ENCODE measurements at regions of chr11 and their contacts with region 1.

Region 1: DNA sequence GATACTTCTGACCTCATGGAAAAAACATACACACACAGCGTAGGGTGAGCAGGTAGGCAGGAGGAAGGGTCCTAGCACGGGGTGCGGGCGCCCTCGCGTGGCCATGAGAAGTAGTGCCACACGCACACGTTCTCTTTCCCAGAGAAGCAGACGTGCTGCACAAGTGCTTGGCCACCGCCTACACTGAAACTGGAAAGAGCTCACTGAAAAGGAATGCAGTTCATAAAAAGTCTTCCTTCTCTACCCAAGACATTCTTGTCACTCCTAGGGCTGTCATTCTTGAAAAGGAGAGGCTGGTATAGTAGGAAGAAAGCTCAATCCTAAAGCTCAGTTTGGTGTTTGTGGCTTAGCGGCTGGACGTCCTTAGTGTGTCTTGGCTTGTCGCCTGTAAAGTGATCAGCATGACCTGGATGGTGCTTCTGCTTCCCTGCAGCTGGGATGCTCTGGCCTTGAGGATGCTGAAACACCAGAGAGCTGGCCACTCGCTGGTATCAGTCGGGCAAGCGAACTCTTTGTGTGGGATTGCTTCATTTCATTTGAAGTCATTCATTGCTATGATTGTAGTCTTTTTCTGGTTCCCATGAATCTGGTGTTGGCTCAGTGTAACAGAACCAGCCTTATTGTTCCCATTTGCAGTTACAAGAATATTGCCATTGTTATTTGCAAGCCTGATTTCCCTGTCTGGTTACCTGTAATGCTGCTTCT is 303.8 kb downstream of the NTM start:
- DNase-seq: peak; percentile 50 to 96
- H3K4me3 ChIP-seq: no peak overlapping the region
- H3K27ac ChIP-seq: no peak overlapping the region
- H3K4me1 ChIP-seq: peaks cover 3 to 9% (median 5%) of the 10 kb centered on the region in 4 experiments; a peak in 5 of 7 replicates
- H3K27me3 ChIP-seq: no peaks in the 10 kb centered on the region; a peak in 1 of 7 replicates
- CTCF ChIP-seq: peak; percentile 95 to 97 (median 97)
- EP300 ChIP-seq: no peak
- POLR2A ChIP-seq: no peak
- RAD21 ChIP-seq: peak; percentile 99

Region 2: GRCh38 chr11:131025020-131025419 is 649.2 kb before region 1 on chr11:
- CTCF ChIA-PET with region 1: interaction called, 24 read pairs
- POLR2A ChIA-PET with region 1: no interaction called
- DNase-seq: no peak
- H3K4me3 ChIP-seq: no peak overlapping the region
- H3K27ac ChIP-seq: no peak overlapping the region
- H3K4me1 ChIP-seq: no peaks in the 10 kb centered on the region
- H3K27me3 ChIP-seq: no peaks in the 10 kb centered on the region
- CTCF ChIP-seq: peak; percentile 72 to 93 (median 82)
- EP300 ChIP-seq: no peak
- POLR2A ChIP-seq: no peak
- RAD21 ChIP-seq: peak; percentile 93 to 94

Region 3: DNA sequence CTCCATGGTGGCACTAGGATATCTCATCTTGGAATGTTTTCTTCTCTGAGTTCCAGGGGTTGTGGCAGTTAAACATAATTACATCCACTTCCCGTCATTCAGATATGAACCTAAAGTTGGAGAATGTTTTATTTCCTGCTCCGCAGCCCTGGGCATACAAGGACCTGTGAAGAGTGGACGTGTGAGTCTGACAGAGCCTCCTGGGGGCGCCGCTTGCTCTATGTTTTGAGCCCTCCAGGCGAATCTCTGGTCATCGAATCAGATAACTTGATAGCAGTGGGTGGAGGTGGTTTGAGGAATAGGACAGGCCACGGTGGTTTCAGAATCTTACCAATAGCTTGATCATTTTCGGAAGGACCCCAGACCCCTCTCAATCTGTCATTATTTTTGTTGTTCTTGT is 129.6 kb before region 1 on chr11:
- CTCF ChIA-PET with region 1: interaction called, 20 read pairs
- POLR2A ChIA-PET with region 1: no interaction called
- DNase-seq: peak; percentile 19 to 63
- H3K4me3 ChIP-seq: no peak overlapping the region
- H3K27ac ChIP-seq: no peak overlapping the region
- H3K4me1 ChIP-seq: peaks cover 0 to 4% (median 3%) of the 10 kb centered on the region in 4 experiments; a peak in 6 of 7 replicates
- H3K27me3 ChIP-seq: no peaks in the 10 kb centered on the region
- CTCF ChIP-seq: peak; percentile 51 to 71 (median 63)
- EP300 ChIP-seq: no peak
- POLR2A ChIP-seq: no peak
- RAD21 ChIP-seq: peak; percentile 73 to 83

Region 4: GRCh38 chr11:131579932-131580387 is 94.2 kb before region 1 on chr11:
- CTCF ChIA-PET with region 1: interaction called, 1,023 read pairs
- POLR2A ChIA-PET with region 1: interaction called, 3 read pairs
- DNase-seq: peak in 1 of 2 experiments; percentile 75
- H3K4me3 ChIP-seq: no peak overlapping the region
- H3K27ac ChIP-seq: no peak overlapping the region
- H3K4me1 ChIP-seq: peaks cover 3 to 4% (median 4%) of the 10 kb centered on the region in 4 experiments; a peak in 4 of 7 replicates
- H3K27me3 ChIP-seq: no peaks in the 10 kb centered on the region
- CTCF ChIP-seq: peak; percentile 72 to 91 (median 80)
- EP300 ChIP-seq: no peak
- POLR2A ChIP-seq: no peak
- RAD21 ChIP-seq: peak; percentile 74 to 82

Region 5: GRCh38 chr11:131614631-131615030 is 59.6 kb before region 1 on chr11:
- CTCF ChIA-PET with region 1: interaction called, 20 read pairs
- POLR2A ChIA-PET with region 1: no interaction called
- DNase-seq: no peak
- H3K4me3 ChIP-seq: no peak overlapping the region
- H3K27ac ChIP-seq: no peak overlapping the region; the same call in 1 of the 2 replicates
- H3K4me1 ChIP-seq: peaks cover 0 to 5% (median 2%) of the 10 kb centered on the region in 4 experiments; a peak in 3 of 7 replicates
- H3K27me3 ChIP-seq: peaks cover 0 to 4% (median 3%) of the 10 kb centered on the region in 4 experiments; a peak in 3 of 7 replicates
- CTCF ChIP-seq: no peak
- EP300 ChIP-seq: no peak
- POLR2A ChIP-seq: no peak
- RAD21 ChIP-seq: no peak

Region 6: GRCh38 chr11:131658952-131659351 is 15.3 kb before region 1 on chr11:
- CTCF ChIA-PET with region 1: interaction called, 52 read pairs
- POLR2A ChIA-PET with region 1: interaction called, 3 read pairs
- DNase-seq: no peak
- H3K4me3 ChIP-seq: no peak overlapping the region
- H3K27ac ChIP-seq: no peak overlapping the region
- H3K4me1 ChIP-seq: peaks cover 16 to 41% (median 35%) of the 10 kb centered on the region in 4 experiments
- H3K27me3 ChIP-seq: 0 out of 7 replicates have a peak, but pooled peaks cover 0 to 1% (median 0%) of the 10 kb centered on the region in 4 experiments
- CTCF ChIP-seq: no peak
- EP300 ChIP-seq: no peak
- POLR2A ChIP-seq: no peak
- RAD21 ChIP-seq: no peak

Region 7: GRCh38 chr11:131823772-131824171 is 149.6 kb after region 1 on chr11:
- CTCF ChIA-PET with region 1: no interaction called
- POLR2A ChIA-PET with region 1: no interaction called
- DNase-seq: no peak
- H3K4me3 ChIP-seq: no peak overlapping the region
- H3K27ac ChIP-seq: no peak overlapping the region
- H3K4me1 ChIP-seq: peaks cover 0 to 6% (median 2%) of the 10 kb centered on the region in 4 experiments; a peak in 3 of 7 replicates
- H3K27me3 ChIP-seq: no peaks in the 10 kb centered on the region
- CTCF ChIP-seq: no peak
- EP300 ChIP-seq: no peak
- POLR2A ChIP-seq: no peak
- RAD21 ChIP-seq: no peak

Region 8: GRCh38 chr11:131999084-131999483 is 324.9 kb after region 1 on chr11:
- CTCF ChIA-PET with region 1: no interaction called
- POLR2A ChIA-PET with region 1: no interaction called
- DNase-seq: no peak
- H3K4me3 ChIP-seq: no peak overlapping the region
- H3K27ac ChIP-seq: no peak overlapping the region
- H3K4me1 ChIP-seq: 0 out of 7 replicates have a peak, but pooled peaks cover 0 to 2% (median 0%) of the 10 kb centered on the region in 4 experiments
- H3K27me3 ChIP-seq: no peaks in the 10 kb centered on the region
- CTCF ChIP-seq: no peak
- EP300 ChIP-seq: no peak
- POLR2A ChIP-seq: no peak
- RAD21 ChIP-seq: no peak

Measured in H1 (cell line).